Motor neuron (in vitro differentiated cells): ENCODE measurements at regions of chr1 and their contacts with region 1.

Region 1: DNA sequence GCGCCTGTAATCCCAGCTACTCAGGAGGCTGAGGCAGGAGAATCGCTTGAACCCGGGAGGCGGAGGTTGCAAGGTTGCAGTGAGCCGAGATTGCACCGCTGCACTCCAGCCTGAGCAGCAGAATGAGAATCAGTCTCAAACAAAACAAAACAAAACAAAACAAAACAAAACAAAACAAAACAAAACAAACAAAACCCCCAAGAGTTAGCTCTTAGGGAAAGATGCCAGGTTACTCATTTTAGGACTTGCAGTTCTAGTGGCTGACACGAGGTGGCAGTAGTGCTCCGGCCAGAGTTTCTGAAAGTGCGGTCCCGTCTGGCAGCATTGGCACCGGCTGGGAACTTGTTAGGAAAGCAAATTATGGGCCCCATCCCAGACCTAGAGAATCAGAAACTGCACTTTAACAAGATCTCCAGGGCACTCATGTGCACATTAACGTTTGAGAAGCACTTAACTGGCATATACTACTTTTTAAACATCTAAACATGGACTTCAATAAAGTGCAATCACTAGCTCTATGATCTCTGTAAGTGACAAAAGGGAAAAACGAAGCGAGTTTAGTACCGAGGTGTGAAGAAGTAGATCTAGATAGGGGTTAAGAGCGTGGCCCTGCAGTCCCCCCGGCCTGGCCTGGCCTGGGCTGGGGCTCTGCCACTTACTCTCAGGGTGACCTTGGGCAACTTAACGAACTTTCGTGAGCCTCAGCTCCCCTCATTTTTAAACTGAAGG is 41.9 kb upstream of the TNFRSF1B start:
- ATAC-seq: peak in 7 of 8 experiments; percentile 33 to 59 (median 44)
- H3K4me3 ChIP-seq: no peak overlapping the region
- H3K27ac ChIP-seq: no peak overlapping the region
- H3K4me1 ChIP-seq: peaks cover 0 to 3% of the 10 kb centered on the region in 2 donors

Region 2: GRCh38 chr1:11629184-11630016 is 495.5 kb before region 1 on chr1:
- in situ Hi-C with region 1: no loop called
- ATAC-seq: peak in 6 of 8 experiments; percentile 18 to 98 (median 96)
- H3K4me3 ChIP-seq: no peak overlapping the region
- H3K27ac ChIP-seq: peak overlapping the region; percentile 29 to 49
- H3K4me1 ChIP-seq: peaks cover 34 to 35% of the 10 kb centered on the region in 2 donors

Region 3: DNA sequence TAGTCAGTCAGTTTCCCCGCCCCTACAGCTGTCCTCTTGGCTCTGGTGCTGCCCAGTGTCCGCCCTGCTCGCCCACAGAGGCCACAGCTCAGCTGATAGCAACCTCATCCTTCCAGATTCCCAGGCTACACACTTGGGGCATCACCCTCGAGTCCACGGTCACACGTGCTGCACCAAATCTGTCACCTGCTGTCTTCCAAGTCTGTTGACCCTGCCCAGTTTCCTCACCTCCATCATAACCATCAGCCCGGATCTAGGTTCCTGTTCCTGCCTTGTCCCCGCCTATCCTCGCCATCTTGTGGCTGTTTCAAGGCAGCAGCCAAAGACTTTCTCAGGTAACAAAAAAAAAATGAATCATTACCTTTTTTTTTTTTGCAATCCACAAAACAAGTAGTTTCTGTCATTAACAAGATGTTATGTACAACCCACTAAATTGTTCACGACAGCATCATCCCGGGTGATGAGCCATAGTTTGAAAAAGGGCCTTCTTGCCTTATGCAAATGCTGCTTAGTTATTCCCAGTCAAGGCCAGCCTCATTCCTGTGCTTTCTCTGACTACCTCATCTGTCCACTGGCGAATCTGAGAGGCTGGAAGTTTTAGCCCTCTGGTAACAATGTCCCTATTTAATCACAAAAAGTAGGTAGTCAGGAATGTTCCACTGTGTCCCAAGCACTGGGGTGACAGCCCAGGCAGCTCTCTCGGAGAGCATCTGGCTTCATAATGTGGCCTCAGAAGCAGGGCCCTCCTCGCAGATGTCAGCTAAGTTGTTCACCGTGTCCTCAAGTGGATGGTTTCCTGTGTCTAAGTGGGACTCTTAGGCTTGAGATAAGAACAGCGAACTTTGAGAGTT is 110.5 kb before region 1 on chr1:
- in situ Hi-C with region 1: no loop called
- ATAC-seq: peak in 1 of 8 experiments; percentile 2
- H3K4me3 ChIP-seq: no peak overlapping the region
- H3K27ac ChIP-seq: no peak overlapping the region
- H3K4me1 ChIP-seq: no peaks in the 10 kb centered on the region

Region 4: DNA sequence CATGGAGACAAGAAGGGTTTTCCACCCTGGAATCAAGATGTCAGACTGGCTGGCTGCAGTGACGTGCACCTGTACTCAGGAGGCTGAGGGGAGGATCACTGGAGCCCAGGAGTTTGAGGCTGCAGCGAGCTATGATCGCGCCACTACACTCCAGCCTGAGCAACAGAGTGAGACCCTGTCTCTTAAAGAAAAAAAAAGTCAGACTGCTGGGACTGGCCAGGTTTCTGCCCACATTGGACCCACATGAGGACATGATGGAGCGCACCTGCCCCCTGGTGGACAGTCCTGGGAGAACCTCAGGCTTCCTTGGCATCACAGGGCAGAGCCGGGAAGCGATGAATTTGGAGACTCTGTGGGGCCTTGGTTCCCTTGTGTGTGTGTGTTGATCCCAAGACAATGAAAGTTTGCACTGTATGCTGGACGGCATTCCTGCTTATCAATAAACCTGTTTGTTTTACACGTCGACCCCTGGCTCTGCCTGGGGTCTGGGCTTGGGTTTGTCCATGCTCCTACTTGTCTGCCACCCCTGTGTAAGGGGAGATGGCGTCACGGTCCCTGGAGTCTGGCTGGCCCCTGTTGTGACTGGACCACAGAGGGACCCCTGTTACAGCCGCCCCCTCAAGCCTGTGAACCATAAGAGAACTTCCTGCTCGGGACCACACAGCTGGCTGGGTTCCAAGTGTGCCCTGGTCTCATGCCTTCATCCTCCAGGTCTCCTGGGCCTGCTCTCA is 84.1 kb after region 1 on chr1:
- in situ Hi-C with region 1: loop called (anchors 5 to 25 kb)
- ATAC-seq: peak; percentile 91 to 99 (median 94)
- H3K4me3 ChIP-seq: no peak overlapping the region
- H3K27ac ChIP-seq: no peak overlapping the region
- H3K4me1 ChIP-seq: peaks cover 11 to 12% of the 10 kb centered on the region in 2 donors

Region 5: DNA sequence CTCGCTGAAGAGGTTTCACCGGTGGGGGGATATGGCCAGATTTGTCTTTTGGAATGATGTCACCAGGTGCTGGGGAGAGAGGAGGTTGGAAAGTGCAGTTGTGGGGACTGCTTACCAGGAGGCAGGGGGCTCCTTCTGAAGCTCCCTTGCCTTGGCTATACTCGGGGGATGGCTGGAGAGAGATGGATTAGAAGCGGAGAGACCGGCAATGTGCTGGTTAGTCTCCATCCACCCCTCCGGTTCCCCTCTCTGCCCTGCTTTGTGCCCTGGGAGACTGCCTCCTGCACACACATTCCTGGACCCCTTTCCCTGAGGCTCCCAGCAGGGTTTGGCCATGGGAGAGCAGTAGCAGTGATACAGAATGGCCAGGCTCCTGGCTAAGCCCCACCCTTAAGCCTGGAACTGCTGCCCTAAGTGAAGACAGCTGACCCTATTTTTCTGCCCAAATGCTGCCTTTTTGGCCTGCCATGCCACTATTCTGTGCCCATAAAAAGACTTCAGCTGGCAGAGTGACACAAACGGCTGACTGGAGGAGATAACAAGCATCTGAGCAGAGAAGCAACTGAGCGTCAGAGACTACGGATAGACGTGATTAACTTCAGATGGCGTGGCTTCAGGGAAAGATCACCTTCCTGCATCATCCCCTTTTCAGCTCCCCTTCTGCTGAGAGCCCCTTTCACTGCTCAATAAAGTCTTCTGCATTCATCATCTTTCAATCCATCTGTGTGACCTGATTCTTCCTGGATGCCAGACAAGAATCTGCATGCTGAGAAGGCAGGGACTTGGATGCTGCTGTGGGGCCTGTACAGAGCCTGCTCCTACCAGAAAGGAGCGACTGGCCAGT is 90.5 kb after region 1 on chr1:
- in situ Hi-C with region 1: loop called in 5 of 9 experiments (anchors 5 to 25 kb)
- ATAC-seq: no peak
- H3K4me3 ChIP-seq: no peak overlapping the region
- H3K27ac ChIP-seq: no peak overlapping the region
- H3K4me1 ChIP-seq: peaks cover 0 to under 1% of the 10 kb centered on the region in 2 donors